CD4-positive, alpha-beta memory T cell (primary cell): ENCODE measurements at regions of chr12 and their contacts with region 1.

Region 1: GRCh38 chr12:119902084-119902509 is 25.0 kb upstream of the CIT start:
- DNase-seq: peak; percentile 61 to 76 (median 67)
- H3K4me3 ChIP-seq: no peak overlapping the region
- H3K4me3 Mint-ChIP-seq: no peak overlapping the region
- H3K27ac ChIP-seq: no peak overlapping the region
- H3K27ac Mint-ChIP-seq: no peak overlapping the region
- H3K4me1 ChIP-seq: no peaks in the 10 kb centered on the region
- H3K4me1 Mint-ChIP-seq: peaks cover 4 to 7% (median 5%) of the 10 kb centered on the region in 4 donors
- H3K27me3 ChIP-seq: no peaks in the 10 kb centered on the region
- H3K27me3 Mint-ChIP-seq: peaks cover 0 to 4% of the 10 kb centered on the region in 2 donors

Region 2: GRCh38 chr12:119695034-119695433 is 207.1 kb before region 1 on chr12:
- CTCF ChIA-PET with region 1: no interaction called
- POLR2A ChIA-PET with region 1: no interaction called
- intact Hi-C with region 1: loop called (anchors 10 kb)
- DNase-seq: no peak
- H3K4me3 ChIP-seq: no peak overlapping the region
- H3K4me3 Mint-ChIP-seq: no peak overlapping the region
- H3K27ac ChIP-seq: no peak overlapping the region
- H3K27ac Mint-ChIP-seq: no peak overlapping the region
- H3K4me1 ChIP-seq: no peaks in the 10 kb centered on the region
- H3K4me1 Mint-ChIP-seq: no peaks in the 10 kb centered on the region
- H3K27me3 ChIP-seq: no peaks in the 10 kb centered on the region
- H3K27me3 Mint-ChIP-seq: no peaks in the 10 kb centered on the region

Region 3: DNA sequence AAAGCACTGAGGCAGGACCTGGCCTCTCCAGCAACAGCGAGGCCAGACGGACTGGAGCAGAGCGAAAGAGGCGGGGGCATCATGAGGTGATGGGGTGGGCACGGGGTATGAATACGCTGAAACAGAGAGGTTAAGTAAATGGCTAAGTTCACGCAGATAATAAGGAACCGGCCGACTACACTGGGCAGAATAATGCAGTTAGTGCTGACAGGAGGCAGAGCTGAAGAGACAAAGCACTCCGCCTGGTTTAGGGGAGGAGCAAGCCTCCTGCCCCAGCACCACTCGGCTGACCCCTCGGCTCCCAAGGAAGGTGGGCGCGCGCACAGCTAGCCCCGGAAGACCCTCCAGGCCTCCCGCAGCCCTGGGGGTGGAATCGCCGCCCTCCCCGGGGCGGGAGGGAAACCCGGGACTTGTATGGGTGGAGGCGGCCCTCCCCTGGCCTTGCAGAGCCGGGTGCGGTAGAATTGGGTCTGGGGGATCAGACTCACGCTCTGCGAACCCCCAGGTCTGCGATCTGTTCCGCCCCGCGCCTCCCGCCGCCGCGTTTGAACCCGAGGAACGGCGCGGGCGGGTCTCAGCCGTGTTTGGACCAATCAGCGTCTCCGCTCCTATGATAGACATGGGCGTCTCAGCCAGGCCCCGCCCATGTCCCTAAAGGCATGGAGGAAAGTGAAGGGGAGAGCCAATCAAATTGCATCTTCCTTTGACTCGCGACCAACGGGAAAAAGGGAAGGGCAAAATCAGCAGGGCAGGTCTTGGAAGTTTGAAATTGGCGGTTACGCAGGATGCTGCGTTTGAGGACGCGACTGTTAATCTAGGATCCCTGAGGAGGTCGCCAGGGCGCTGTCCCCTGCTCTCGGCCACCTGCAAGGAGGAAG is 25.1 kb before region 1 on chr12 and contains the start of gene CIT:
- CTCF ChIA-PET with region 1: interaction called, 3 read pairs
- POLR2A ChIA-PET with region 1: no interaction called
- intact Hi-C with region 1: loop called (anchors 1 kb)
- DNase-seq: peak; percentile 80 to 86 (median 84)
- H3K4me3 ChIP-seq: peak within 1 kb of the TSS; percentile 60 to 79
- H3K4me3 Mint-ChIP-seq: peak within 1 kb of the TSS; percentile 78 to 92 (median 87)
- H3K27ac ChIP-seq: peak within 1 kb of the TSS; percentile 45
- H3K27ac Mint-ChIP-seq: peak within 1 kb of the TSS; percentile 4 to 91 (median 65)
- H3K4me1 ChIP-seq: peaks cover 4% of the 10 kb centered on the region
- H3K4me1 Mint-ChIP-seq: peaks cover 10 to 15% (median 13%) of the 10 kb centered on the region in 4 donors
- H3K27me3 ChIP-seq: no peaks in the 10 kb centered on the region
- H3K27me3 Mint-ChIP-seq: peaks cover 3 to 4% of the 10 kb centered on the region in 2 donors
- total RNA-seq, gene CIT: 1.6 to 3.5 TPM